Activated CD8-positive, alpha-beta T cell treated with anti-CD3 and anti-CD28 coated beads for 36 hours (primary cell): ENCODE measurements at regions of chr17 and their contacts with region 1.

Region 1: GRCh38 chr17:75109407-75110233 is at the start of gene ARMC7:
- DNase-seq: peak; percentile 91
- ATAC-seq: peak; percentile 84
- H3K4me3 Mint-ChIP-seq: peak within 1 kb of the TSS; percentile 87
- H3K27ac Mint-ChIP-seq: peak within 1 kb of the TSS; percentile 90
- H3K4me1 Mint-ChIP-seq: peaks cover 32% of the 10 kb centered on the region
- H3K27me3 Mint-ChIP-seq: no peaks in the 10 kb centered on the region
- CTCF ChIP-seq: no peak
- total RNA-seq, gene ARMC7: 5.4 TPM

Region 2: GRCh38 chr17:75069783-75070182 is 39.8 kb before region 1 on chr17:
- CTCF ChIA-PET with region 1: interaction called, 14 read pairs
- POLR2A ChIA-PET with region 1: interaction called, 3 read pairs
- intact Hi-C with region 1: no loop called
- DNase-seq: peak; percentile 35
- ATAC-seq: no peak
- H3K4me3 Mint-ChIP-seq: no peak overlapping the region
- H3K27ac Mint-ChIP-seq: no peak overlapping the region
- H3K4me1 Mint-ChIP-seq: peaks cover 28% of the 10 kb centered on the region
- H3K27me3 Mint-ChIP-seq: no peaks in the 10 kb centered on the region
- CTCF ChIP-seq: no peak

Region 3: DNA sequence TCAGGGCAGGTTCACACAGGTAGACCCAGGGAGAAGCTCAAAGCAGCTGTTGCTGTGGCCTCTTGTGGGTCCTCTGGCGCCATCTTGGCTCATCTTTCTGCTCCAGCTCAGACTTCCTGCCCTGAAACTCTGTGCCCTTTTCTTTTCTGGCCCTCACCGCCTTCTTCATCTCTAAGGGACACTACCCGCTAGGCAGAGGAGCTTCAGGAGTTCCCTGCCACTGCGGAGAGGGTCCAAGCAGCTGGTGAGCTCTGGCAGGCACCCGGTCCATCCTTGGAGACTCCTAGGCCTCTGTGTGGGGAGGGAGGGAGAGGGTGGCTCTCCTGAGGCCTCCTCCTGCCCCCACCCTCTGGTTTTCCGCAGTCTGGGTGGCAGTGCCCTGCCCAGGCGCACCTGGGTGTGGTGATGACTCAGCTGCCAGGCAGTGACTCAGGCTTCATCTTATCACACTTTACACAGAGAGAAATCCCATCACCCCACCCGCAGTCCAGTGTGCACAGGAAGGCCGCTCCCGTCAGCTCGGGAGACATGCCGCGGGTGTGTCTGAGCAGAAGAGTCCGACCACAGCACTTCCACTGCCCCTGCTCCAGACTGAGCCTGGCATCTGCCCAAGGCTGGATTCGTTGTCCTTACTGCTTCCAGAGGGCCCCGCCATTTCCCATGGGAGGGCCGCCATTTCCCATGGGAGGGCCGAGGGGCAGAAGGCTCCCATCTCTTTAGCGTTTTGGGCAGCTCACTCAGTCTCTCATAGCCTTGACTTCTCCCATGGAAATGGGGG is 14.6 kb after region 1 on chr17:
- CTCF ChIA-PET with region 1: interaction called, 147 read pairs
- POLR2A ChIA-PET with region 1: interaction called, 40 read pairs
- intact Hi-C with region 1: no loop called
- DNase-seq: peak; percentile 71
- ATAC-seq: peak; percentile 86
- H3K4me3 Mint-ChIP-seq: no peak overlapping the region
- H3K27ac Mint-ChIP-seq: peak overlapping the region; percentile 73
- H3K4me1 Mint-ChIP-seq: peaks cover 25% of the 10 kb centered on the region
- H3K27me3 Mint-ChIP-seq: no peaks in the 10 kb centered on the region
- CTCF ChIP-seq: no peak

Region 4: GRCh38 chr17:75173526-75173925 is 63.9 kb after region 1 on chr17:
- CTCF ChIA-PET with region 1: interaction called, 90 read pairs
- POLR2A ChIA-PET with region 1: interaction called, 12 read pairs
- intact Hi-C with region 1: loop called (anchors 10 kb)
- DNase-seq: no peak
- ATAC-seq: no peak
- H3K4me3 Mint-ChIP-seq: no peak overlapping the region
- H3K27ac Mint-ChIP-seq: peak overlapping the region; percentile 28
- H3K4me1 Mint-ChIP-seq: peaks cover 27% of the 10 kb centered on the region
- H3K27me3 Mint-ChIP-seq: no peaks in the 10 kb centered on the region
- CTCF ChIP-seq: no peak

Region 5: GRCh38 chr17:75205037-75205792 is 95.6 kb after region 1 on chr17 and contains the start of gene NUP85:
- CTCF ChIA-PET with region 1: interaction called, 221 read pairs
- POLR2A ChIA-PET with region 1: interaction called, 8 read pairs
- intact Hi-C with region 1: loop called (anchors 5 kb)
- DNase-seq: peak; percentile 94
- ATAC-seq: peak; percentile 95
- H3K4me3 Mint-ChIP-seq: peak within 1 kb of the TSS; percentile 95
- H3K27ac Mint-ChIP-seq: peak within 1 kb of the TSS; percentile 100
- H3K4me1 Mint-ChIP-seq: peaks cover 22% of the 10 kb centered on the region
- H3K27me3 Mint-ChIP-seq: no peaks in the 10 kb centered on the region
- CTCF ChIP-seq: no peak
- total RNA-seq, gene NUP85: 108 to 116 TPM

Region 6: GRCh38 chr17:75271233-75271954 is 161.8 kb after region 1 on chr17:
- CTCF ChIA-PET with region 1: interaction called, 10 read pairs
- POLR2A ChIA-PET with region 1: interaction called, 4 read pairs
- intact Hi-C with region 1: no loop called
- DNase-seq: peak; percentile 87
- ATAC-seq: peak; percentile 91
- H3K4me3 Mint-ChIP-seq: peak overlapping the region; percentile 86
- H3K27ac Mint-ChIP-seq: peak overlapping the region; percentile 81
- H3K4me1 Mint-ChIP-seq: peaks cover 32% of the 10 kb centered on the region
- H3K27me3 Mint-ChIP-seq: no peaks in the 10 kb centered on the region
- CTCF ChIP-seq: peak; percentile 66